A673 (cell line): ENCODE measurements at regions of chr10 and their contacts with region 1.

Region 1: GRCh38 chr10:109427411-109427810 is 495.9 kb downstream of the XPNPEP1 start:
- DNase-seq: peak; percentile 84
- H3K4me3 ChIP-seq: no peak overlapping the region
- H3K27ac ChIP-seq: peak overlapping the region; percentile 75
- H3K4me1 ChIP-seq: peaks cover 82% of the 10 kb centered on the region
- H3K27me3 ChIP-seq: no peaks in the 10 kb centered on the region
- CTCF ChIP-seq: peak; percentile 68

Region 2: DNA sequence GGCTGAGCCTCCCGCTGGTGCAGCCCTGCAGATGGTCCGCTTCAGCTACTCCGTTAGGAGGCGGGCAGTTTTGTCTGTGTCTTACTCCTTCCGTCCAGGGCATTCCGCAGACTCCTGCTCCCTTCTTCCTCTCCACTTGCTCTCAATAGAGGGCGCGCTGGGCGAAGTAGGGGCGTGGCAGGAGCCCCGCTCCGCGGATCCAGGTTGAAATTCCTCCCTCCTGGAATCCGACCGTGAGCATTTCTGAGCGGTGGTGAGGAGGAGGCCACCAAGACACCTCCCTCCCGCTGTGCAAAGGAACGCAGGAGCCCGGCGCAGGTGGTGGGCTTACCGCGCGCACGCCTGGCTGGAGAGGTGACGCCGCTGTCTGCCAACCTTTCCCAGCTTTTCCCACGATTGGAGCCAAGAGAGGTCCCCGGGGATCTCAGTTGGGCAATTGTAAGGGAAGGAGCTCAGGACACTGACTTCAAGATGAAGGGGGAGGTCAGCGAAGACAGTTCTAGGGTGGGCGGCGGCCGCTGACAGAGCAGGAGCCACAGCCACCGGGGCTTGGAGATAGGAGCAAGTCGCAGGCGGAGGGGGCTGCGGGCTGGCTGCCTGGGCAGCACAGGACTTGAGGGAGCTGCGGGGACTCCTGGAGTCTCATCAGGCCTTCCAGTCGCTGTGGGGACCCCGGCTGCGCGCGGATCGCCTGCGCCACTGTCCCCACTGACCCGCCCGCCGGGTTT is 515.4 kb before region 1 on chr10:
- CTCF ChIA-PET with region 1: no interaction called
- POLR2A ChIA-PET with region 1: no interaction called
- intact Hi-C with region 1: loop called (anchors 5 kb)
- DNase-seq: peak; percentile 85
- H3K4me3 ChIP-seq: peak overlapping the region; percentile 93
- H3K27ac ChIP-seq: peak overlapping the region; percentile 71
- H3K4me1 ChIP-seq: peaks cover 9% of the 10 kb centered on the region
- H3K27me3 ChIP-seq: no peaks in the 10 kb centered on the region
- CTCF ChIP-seq: peak; percentile 86

Region 3: GRCh38 chr10:109480836-109481235 is 53.4 kb after region 1 on chr10:
- CTCF ChIA-PET with region 1: no interaction called
- POLR2A ChIA-PET with region 1: no interaction called
- intact Hi-C with region 1: no loop called
- DNase-seq: peak; percentile 19
- H3K4me3 ChIP-seq: no peak overlapping the region
- H3K27ac ChIP-seq: no peak overlapping the region
- H3K4me1 ChIP-seq: peaks cover 41% of the 10 kb centered on the region
- H3K27me3 ChIP-seq: no peaks in the 10 kb centered on the region
- CTCF ChIP-seq: no peak

Region 4: DNA sequence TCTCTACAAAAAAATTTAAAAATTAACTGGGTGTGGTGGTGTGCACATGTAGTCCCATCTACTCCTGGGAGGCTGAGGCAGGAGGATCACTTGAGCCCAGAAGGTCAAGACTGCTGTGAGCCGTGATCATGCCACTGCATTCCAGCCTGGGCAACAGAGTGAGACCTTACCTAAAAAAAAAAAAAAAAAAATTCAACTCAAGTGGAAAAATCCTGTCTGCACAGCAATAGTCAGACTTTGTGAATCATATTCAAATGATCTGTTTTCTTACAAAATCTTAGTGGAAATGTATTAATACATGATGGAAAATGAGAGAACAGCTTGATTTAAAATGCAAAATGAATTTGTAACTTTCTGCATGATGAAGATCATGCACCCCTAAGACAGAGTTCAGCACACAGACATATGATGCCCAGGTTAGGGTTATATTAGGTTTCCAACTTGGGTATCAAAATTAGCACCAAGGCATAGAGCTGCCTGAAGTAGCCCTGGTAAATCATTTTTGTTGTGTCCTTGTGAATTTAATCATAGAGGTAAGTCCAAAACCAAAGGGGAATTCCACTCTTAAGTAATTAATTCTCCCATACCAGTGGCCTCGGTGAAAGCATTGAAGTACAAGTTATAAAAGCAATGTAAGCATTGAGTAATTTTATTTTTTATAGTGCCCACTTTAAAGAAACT is 674.2 kb after region 1 on chr10:
- CTCF ChIA-PET with region 1: no interaction called
- POLR2A ChIA-PET with region 1: interaction called, 14 read pairs
- intact Hi-C with region 1: no loop called
- DNase-seq: no peak
- H3K4me3 ChIP-seq: no peak overlapping the region
- H3K27ac ChIP-seq: no peak overlapping the region
- H3K4me1 ChIP-seq: peaks cover 14% of the 10 kb centered on the region
- H3K27me3 ChIP-seq: no peaks in the 10 kb centered on the region
- CTCF ChIP-seq: no peak